Activated CD4-positive, alpha-beta memory T cell treated with anti-CD3 and anti-CD28 coated beads for 36 hours (primary cell): ENCODE measurements at regions of chr18 and their contacts with region 1.

Region 1: DNA sequence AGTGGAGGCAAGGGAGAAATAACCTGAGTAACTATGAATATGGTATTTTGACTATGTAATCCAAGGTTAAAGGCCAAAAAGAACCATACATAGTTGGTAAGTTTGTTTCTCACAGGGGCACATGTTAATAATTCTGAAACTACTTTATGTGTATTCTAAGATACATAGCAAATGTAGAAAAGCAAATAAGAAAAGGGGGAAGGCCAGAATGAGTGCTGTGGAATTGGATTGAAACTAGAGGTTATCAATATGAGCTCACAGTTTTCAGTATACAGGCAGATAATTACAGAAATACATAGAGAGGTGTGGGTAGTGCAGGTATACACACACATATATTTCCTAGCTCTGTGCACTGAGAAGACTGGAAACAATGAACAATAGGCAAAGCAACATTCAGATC is 13.7 kb downstream of the INO80C start:
- DNase-seq: no peak
- H3K4me3 Mint-ChIP-seq: no peak overlapping the region
- H3K27ac Mint-ChIP-seq: no peak overlapping the region
- H3K4me1 Mint-ChIP-seq: peaks cover 42% of the 10 kb centered on the region
- H3K27me3 Mint-ChIP-seq: no peaks in the 10 kb centered on the region

Region 2: DNA sequence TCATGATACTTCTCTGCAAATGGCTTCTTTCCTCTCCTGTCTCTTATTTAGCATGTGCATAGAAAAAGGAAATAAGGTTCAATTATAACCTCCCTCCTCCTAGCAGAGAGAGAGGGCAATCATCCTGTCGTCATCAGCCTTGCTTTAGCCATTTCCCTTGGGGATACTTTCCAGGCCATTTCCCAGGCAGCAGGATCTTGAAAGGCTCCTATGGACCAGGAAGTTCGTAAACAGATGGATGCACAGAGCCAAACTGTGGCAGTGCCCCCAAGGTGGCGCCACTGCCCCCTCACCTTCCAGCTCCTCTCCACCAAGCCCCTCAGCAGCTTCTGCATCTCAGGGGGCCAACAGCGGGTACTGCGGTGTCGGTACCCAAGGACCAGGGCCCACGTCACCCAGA is 616.5 kb before region 1 on chr18:
- CTCF ChIA-PET with region 1: no interaction called
- POLR2A ChIA-PET with region 1: no interaction called
- intact Hi-C with region 1: loop called (anchors 10 kb)
- DNase-seq: peak; percentile 24
- H3K4me3 Mint-ChIP-seq: no peak overlapping the region
- H3K27ac Mint-ChIP-seq: no peak overlapping the region
- H3K4me1 Mint-ChIP-seq: peaks cover 35% of the 10 kb centered on the region
- H3K27me3 Mint-ChIP-seq: peaks cover 12% of the 10 kb centered on the region

Region 3: DNA sequence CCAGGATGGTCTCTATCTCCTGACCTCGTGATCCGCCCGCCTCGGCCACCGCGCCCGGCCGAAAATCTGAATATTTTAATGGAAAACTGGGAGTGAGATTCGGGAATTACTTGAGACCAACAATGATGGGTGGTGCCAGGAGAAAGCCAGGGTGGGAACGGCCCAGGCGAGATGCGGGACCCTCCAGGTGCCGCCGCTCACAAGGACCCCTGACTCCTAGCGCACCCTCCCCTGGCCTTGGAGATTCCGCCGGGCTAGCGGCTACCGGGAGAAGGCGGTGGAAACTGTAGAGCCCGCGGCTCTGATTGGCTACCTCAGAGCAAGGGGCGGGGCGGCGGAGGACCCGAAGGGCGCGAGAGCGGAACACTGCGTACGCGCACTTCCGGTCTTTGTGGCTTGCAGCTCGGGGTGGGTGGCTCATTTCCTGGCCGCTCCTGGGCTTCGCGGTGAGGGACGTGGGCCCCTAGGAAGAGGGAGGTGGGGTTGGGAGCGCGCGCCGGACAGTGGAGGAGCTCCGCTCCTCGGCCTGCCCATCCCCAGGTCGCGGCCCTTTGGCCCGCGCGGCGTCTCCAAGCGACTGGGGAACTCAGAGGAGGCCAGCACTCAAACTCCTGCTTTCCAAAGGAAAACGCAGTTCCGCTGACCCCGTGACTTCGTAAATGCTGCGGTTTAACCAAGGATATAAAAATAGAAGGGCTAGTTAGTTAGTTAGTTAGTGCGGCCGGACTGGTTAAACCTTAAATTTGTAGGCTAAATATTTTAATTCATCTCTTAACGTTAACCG is 243.2 kb before region 1 on chr18 and contains the start of gene ZNF397:
- CTCF ChIA-PET with region 1: no interaction called
- POLR2A ChIA-PET with region 1: no interaction called
- intact Hi-C with region 1: no loop called
- DNase-seq: peak; percentile 98
- H3K4me3 Mint-ChIP-seq: peak within 1 kb of the TSS; percentile 96
- H3K27ac Mint-ChIP-seq: peak within 1 kb of the TSS; percentile 98
- H3K4me1 Mint-ChIP-seq: peaks cover 26% of the 10 kb centered on the region
- H3K27me3 Mint-ChIP-seq: no peaks in the 10 kb centered on the region
- total RNA-seq, gene ZNF397: 19.2 to 19.6 TPM

Region 4: DNA sequence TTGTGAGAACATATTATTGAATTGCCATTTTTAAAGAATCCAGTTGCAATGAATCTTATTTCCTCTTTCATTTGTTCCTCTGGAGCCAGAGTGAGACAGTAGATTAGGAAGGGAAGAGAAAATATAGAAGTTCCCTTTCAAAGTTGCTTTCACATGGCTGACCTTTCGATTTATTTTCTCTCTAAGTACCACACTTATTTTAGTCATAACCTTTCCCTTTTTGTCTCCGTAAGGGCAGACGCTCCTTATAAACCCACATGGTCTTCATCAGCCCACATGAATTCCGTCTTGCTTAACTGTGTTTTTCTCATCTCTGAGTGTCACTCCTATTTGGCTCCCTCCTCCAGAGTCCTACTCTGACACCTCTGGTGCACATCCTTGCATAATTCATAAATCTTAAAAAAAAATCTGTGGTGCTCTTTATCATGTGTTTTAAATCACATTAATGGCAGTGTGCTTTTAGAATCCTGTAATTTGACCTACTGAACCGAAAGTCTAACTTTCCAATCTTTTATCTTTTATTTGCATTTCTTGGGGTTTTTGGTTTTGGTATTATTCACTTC is 68.4 kb before region 1 on chr18:
- CTCF ChIA-PET with region 1: no interaction called
- POLR2A ChIA-PET with region 1: no interaction called
- intact Hi-C with region 1: loop called (anchors 2 kb)
- DNase-seq: no peak
- H3K4me3 Mint-ChIP-seq: peak overlapping the region; percentile 52
- H3K27ac Mint-ChIP-seq: no peak overlapping the region
- H3K4me1 Mint-ChIP-seq: peaks cover 25% of the 10 kb centered on the region
- H3K27me3 Mint-ChIP-seq: peaks cover 5% of the 10 kb centered on the region

Region 5: DNA sequence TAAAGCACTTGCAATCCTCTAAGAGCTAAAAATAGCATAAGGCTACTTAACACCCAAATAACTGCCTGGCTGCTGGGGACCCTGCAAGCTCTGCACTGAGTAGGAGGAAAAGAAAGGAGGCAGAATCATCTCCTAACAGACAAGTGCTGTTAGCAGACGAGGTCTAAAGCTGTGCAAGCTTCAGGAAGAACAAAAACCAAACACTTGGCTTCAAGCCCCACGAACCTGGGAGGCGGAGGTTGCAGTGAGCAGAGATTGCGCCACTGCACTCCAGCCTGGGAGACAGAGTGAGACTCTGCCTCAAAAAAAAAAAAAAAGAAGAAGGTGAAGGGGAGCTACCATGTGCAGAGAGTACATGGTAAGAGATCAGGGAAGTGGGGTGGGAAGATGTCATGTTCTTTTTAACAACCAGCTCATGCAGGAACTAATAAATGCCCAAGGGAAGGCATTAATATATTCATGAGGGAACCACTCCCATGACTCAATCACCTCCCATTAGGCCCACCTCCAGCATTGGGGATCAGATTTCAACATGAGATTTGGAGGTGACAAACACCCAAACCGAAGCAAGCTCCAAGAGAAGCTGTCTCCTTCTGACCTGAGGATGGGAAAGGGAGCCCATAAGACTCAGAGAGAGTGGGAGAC is 42.6 kb after region 1 on chr18:
- CTCF ChIA-PET with region 1: no interaction called
- POLR2A ChIA-PET with region 1: no interaction called
- intact Hi-C with region 1: no loop called
- DNase-seq: no peak
- H3K4me3 Mint-ChIP-seq: no peak overlapping the region
- H3K27ac Mint-ChIP-seq: no peak overlapping the region
- H3K4me1 Mint-ChIP-seq: peaks cover 4% of the 10 kb centered on the region
- H3K27me3 Mint-ChIP-seq: peaks cover 40% of the 10 kb centered on the region

Region 6: DNA sequence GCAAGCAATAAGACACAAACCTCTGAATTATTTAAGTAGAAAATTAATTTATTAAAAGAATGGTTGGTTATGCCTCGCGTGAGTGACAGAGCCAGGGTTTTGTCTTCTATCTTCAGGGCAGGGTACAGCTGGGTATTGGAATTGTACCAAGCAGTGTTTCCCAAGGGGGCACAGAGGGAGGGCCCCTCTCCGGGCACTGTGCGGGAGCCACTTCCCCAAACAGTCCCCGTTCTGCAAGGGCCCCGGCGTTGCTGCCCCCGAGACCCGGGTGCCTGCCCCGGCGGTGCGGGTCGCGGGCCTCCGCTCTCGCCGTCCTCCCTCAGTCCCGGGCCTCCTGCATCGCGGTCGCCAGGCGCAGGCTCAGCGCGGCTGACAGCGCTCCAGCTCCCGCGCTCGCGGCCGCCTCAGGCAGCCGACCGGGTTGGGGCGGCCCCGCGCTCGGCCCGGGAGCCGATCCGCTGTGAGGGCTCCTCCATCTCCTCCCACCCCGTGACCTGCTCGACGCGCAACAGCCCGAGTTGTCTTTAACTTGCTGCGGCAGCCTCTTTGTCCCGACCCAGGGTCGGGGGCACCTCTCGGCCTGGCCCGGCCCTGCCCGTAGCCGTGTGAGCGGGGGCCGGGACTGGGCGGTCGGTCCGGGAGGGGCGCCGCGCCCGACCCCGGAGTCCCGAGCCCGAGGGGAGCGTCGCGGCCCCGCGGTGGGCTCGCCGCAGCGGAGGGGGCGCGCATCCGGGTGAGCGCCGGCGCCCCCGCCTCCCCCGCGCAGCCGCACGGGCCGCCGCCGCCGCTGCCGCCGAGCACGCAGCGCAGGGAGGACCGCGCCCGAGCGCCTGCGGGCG is 96.9 kb after region 1 on chr18:
- CTCF ChIA-PET with region 1: no interaction called
- POLR2A ChIA-PET with region 1: interaction called, 5 read pairs
- intact Hi-C with region 1: loop called (anchors 1 kb)
- DNase-seq: peak; percentile 61
- H3K4me3 Mint-ChIP-seq: peak overlapping the region; percentile 68
- H3K27ac Mint-ChIP-seq: peak overlapping the region; percentile 53
- H3K4me1 Mint-ChIP-seq: peaks cover 34% of the 10 kb centered on the region
- H3K27me3 Mint-ChIP-seq: peaks cover 25% of the 10 kb centered on the region

Region 7: DNA sequence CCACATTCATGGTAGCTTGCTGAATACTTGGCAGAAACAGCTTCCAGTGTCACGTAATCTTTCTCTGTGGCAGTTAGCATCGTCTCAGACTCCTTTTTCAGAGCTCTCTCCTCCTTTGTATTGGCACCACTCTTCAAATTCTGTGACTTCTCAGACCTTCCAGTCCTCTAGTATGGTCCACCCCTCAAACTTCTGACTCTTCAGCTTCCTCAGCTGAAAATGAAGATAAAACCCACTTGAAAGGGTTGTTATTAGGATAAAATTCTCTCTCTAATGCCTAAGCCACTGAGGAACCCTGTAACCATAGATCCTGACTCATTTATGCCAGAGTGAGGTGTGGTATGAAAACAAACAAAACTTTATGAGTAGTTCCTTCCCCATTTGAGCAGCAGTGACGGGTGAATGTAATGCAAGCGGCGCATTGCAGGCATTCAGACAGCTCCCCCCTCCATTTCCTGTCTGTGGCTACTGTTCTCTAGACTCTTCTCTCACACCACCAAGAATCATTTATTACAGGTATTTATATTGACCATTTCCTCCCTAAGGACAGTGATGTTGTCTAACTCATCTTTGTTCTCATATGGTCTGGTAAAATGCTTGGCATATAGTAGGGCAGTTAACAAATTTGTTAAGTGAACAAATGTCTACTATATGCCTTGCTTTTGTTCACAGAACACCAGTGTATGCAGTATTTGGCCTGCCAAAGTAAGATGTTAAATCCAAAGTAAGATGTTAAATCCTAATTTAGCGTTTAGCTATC is 132.8 kb after region 1 on chr18:
- CTCF ChIA-PET with region 1: interaction called, 4 read pairs
- POLR2A ChIA-PET with region 1: no interaction called
- intact Hi-C with region 1: loop called (anchors 2 kb)
- DNase-seq: peak; percentile 81
- H3K4me3 Mint-ChIP-seq: no peak overlapping the region
- H3K27ac Mint-ChIP-seq: no peak overlapping the region
- H3K4me1 Mint-ChIP-seq: peaks cover 7% of the 10 kb centered on the region
- H3K27me3 Mint-ChIP-seq: no peaks in the 10 kb centered on the region

Region 8: DNA sequence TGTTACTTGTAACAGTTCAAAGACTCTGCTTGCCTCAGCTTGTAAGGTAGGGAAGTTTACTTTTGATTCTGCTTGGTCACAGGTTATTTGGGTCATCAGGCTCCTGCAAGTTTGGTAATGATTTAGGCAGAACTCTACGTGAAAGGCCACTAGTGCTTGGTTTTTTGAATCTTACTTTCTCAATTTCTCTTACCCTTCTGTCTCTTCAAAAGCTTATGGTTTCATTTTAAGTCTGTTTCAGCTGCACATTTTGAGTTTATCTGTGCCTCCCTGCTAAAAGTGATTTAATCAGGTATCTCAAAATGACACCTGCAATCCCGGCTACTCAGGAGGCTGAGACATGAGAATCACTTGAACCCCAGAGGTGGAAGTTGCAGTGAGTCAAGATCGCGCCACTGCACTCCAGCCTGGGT is 676.9 kb after region 1 on chr18:
- CTCF ChIA-PET with region 1: no interaction called
- POLR2A ChIA-PET with region 1: no interaction called
- intact Hi-C with region 1: loop called (anchors 2 kb)
- DNase-seq: peak; percentile 52
- H3K4me3 Mint-ChIP-seq: no peak overlapping the region
- H3K27ac Mint-ChIP-seq: peak overlapping the region; percentile 70
- H3K4me1 Mint-ChIP-seq: peaks cover 34% of the 10 kb centered on the region
- H3K27me3 Mint-ChIP-seq: no peaks in the 10 kb centered on the region